Panc1 (cell line): ENCODE measurements at regions of chr1 and their contacts with region 1.

Region 1: GRCh38 chr1:234499119-234499942 is 20.4 kb upstream of the TARBP1 start:
- DNase-seq: peak; percentile 82
- ATAC-seq: peak; percentile 97
- H3K4me3 ChIP-seq: peak overlapping the region; percentile 6 to 35; a peak in 3 of 4 replicates
- H3K27ac ChIP-seq: peak overlapping the region; percentile 98
- H3K4me1 ChIP-seq: peaks cover 41% of the 10 kb centered on the region
- H3K27me3 ChIP-seq: no peaks in the 10 kb centered on the region
- CTCF ChIP-seq: peak; percentile 97

Region 2: GRCh38 chr1:233424779-233425178 is 1074.6 kb before region 1 on chr1:
- CTCF ChIA-PET with region 1: no interaction called
- POLR2A ChIA-PET with region 1: no interaction called
- in situ Hi-C with region 1: no loop called
- intact Hi-C with region 1: no loop called
- DNase-seq: no peak
- ATAC-seq: no peak
- H3K4me3 ChIP-seq: no peak overlapping the region
- H3K27ac ChIP-seq: no peak overlapping the region
- H3K4me1 ChIP-seq: no peaks in the 10 kb centered on the region
- H3K27me3 ChIP-seq: peaks cover 16% of the 10 kb centered on the region
- CTCF ChIP-seq: peak; percentile 9; the same call in 1 of the 2 replicates

Region 3: DNA sequence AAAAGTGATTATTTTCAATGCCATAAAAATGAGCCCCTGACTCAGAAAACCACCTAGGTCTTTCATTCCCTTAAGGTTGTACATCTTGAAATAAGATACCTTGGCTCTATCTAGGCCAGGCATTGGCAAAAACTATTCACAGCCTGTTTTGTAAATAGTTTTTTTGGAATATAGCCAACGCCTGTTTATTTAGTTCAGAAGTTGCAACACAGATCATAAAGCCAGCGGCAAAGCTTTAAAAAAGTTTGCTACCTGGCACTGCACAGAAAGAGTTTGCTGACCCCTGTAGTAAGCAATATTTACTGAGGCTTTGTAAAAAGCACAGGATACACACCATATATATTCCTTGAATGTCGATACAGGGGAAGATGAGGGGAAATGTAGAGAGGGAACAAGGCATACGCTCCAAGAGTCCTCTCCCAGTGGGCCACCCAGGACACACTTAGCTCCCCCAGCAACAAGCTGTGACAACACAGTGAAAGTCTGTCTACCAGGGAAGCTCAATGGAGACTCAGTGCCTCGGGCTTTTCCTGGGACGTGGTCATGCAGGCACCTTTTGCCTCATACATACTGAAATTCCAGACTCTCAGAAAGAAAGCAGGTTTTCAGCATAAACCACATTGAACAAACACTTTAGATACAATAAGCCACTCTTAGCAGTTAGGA is 40.8 kb before region 1 on chr1:
- CTCF ChIA-PET with region 1: no interaction called
- POLR2A ChIA-PET with region 1: no interaction called
- in situ Hi-C with region 1: no loop called
- intact Hi-C with region 1: no loop called
- DNase-seq: no peak
- ATAC-seq: no peak
- H3K4me3 ChIP-seq: no peak overlapping the region
- H3K27ac ChIP-seq: no peak overlapping the region
- H3K4me1 ChIP-seq: 0 out of 2 replicates have a peak, but pooled peaks cover 6% of the 10 kb centered on the region
- H3K27me3 ChIP-seq: no peaks in the 10 kb centered on the region
- CTCF ChIP-seq: no peak

Region 4: GRCh38 chr1:234722904-234723720 is 223.8 kb after region 1 on chr1:
- CTCF ChIA-PET with region 1: no interaction called
- POLR2A ChIA-PET with region 1: no interaction called
- in situ Hi-C with region 1: no loop called
- intact Hi-C with region 1: loop called (anchors 10 kb)
- DNase-seq: peak; percentile 88
- ATAC-seq: peak; percentile 5; the same call in 1 of the 2 replicates
- H3K4me3 ChIP-seq: peak overlapping the region in 1 of 2 experiments; percentile 4; a peak in 1 of 4 replicates
- H3K27ac ChIP-seq: peak overlapping the region; percentile 95
- H3K4me1 ChIP-seq: peaks cover 82% of the 10 kb centered on the region
- H3K27me3 ChIP-seq: no peaks in the 10 kb centered on the region
- CTCF ChIP-seq: no peak

Region 5: DNA sequence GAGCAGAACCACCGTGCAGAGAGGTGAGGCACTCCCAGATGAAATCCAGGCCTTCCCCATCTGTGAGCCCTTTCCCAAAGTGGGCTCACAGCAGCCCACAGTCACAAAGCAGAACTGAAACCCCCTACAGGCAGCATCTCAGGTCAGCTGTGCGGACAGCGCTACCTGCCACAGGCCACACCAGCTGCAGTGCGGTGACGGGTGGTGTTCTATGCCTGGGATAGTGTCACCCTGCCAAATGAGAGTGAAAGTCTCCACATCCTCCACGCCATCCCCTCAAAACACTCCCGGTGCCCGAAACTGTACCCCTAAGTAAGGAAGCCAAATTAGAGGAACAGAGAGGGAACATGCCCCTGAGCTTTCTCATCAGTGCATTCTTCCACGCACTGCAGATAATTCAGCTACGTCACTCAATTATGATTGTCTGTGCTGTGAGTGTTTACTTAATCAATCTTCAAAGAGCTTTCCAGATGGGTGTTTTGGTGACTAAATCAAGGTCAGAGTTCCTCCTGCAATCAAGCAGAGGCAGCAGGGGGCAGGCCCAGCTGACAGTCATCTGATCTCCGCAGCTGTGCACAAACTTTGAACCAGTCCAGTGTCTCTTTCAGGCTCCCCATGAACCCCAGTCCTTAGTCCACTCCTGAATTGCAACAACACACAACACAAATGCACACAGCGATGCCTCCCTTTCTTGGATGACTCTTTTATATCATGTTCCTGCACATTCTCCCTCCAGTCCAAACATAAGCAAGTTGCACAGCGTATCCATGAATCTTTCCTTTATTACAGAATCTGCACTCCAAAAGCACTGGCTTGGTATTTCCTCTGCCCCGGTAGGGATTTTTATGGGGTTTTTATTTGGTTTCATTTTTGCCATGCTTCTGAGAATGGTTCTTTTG is 479.3 kb after region 1 on chr1:
- CTCF ChIA-PET with region 1: no interaction called
- POLR2A ChIA-PET with region 1: interaction called, 5 read pairs
- in situ Hi-C with region 1: no loop called
- intact Hi-C with region 1: loop called (anchors 5 kb)
- DNase-seq: no peak
- ATAC-seq: peak; percentile 66
- H3K4me3 ChIP-seq: peak overlapping the region in 1 of 2 experiments; percentile 3; a peak in 2 of 4 replicates
- H3K27ac ChIP-seq: peak overlapping the region; percentile 100
- H3K4me1 ChIP-seq: peaks cover 92% of the 10 kb centered on the region
- H3K27me3 ChIP-seq: no peaks in the 10 kb centered on the region
- CTCF ChIP-seq: no peak

Region 6: GRCh38 chr1:235075188-235075926 is 576.0 kb after region 1 on chr1:
- CTCF ChIA-PET with region 1: no interaction called
- POLR2A ChIA-PET with region 1: interaction called, 10 read pairs
- in situ Hi-C with region 1: no loop called
- intact Hi-C with region 1: no loop called
- DNase-seq: no peak
- ATAC-seq: peak; percentile 70
- H3K4me3 ChIP-seq: peak overlapping the region in 1 of 2 experiments; percentile 7; a peak in 2 of 4 replicates
- H3K27ac ChIP-seq: peak overlapping the region; percentile 100
- H3K4me1 ChIP-seq: peaks cover 69% of the 10 kb centered on the region
- H3K27me3 ChIP-seq: no peaks in the 10 kb centered on the region
- CTCF ChIP-seq: no peak

Region 7: GRCh38 chr1:235317168-235317567 is 817.8 kb after region 1 on chr1:
- CTCF ChIA-PET with region 1: no interaction called
- POLR2A ChIA-PET with region 1: interaction called, 11 read pairs
- in situ Hi-C with region 1: no loop called
- intact Hi-C with region 1: no loop called
- DNase-seq: no peak
- ATAC-seq: 0 out of 2 replicates have a peak, but pooled peaks have one; percentile 34
- H3K4me3 ChIP-seq: no peak overlapping the region
- H3K27ac ChIP-seq: no peak overlapping the region
- H3K4me1 ChIP-seq: peaks cover 8% of the 10 kb centered on the region
- H3K27me3 ChIP-seq: no peaks in the 10 kb centered on the region
- CTCF ChIP-seq: no peak